ENCODE measurements at regions of chr1 and their contacts with region 1.

Region 1: GRCh38 chr1:6822530-6823359 is 37.5 kb downstream of the CAMTA1 start:
- DNase-seq: no peak
- ATAC-seq: peak; percentile 51; the same call in 1 of the 2 replicates
- H3K4me3 ChIP-seq: no peak overlapping the region
- H3K27ac ChIP-seq: no peak overlapping the region
- H3K4me1 ChIP-seq: peaks cover 11% of the 10 kb centered on the region; the same call in 1 of the 2 replicates
- H3K27me3 ChIP-seq: no peaks in the 10 kb centered on the region
- CTCF ChIP-seq: no peak
- POLR2A ChIP-seq: no peak
- RAD21 ChIP-seq: no peak

Region 2: DNA sequence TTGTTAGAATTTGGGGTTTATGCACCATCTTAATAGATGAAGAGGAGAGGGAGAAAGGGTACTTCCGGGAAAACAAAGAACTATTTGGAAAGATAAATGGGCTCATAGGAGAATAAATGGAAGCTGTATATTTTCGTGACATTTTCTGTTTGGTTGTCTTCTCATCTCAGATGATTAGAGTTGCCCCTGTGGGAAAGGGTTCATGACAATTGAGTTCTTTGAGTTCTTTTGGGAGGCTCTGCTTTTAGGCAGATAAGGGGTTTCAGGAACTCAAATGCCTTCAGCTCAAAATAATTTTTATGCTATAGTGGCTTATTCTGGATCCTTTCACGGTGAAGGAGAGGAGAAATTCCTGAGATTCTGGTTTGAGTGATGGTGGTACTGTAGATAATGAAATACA is 26.1 kb after region 1 on chr1:
- CTCF ChIA-PET with region 1: interaction called, 3 read pairs
- POLR2A ChIA-PET with region 1: no interaction called
- dilution Hi-C with region 1: no loop called
- in situ Hi-C with region 1: no loop called
- intact Hi-C with region 1: loop called (anchors 2 kb)
- DNase-seq: no peak
- ATAC-seq: no peak
- H3K4me3 ChIP-seq: no peak overlapping the region
- H3K27ac ChIP-seq: no peak overlapping the region
- H3K4me1 ChIP-seq: 0 out of 2 replicates have a peak, but pooled peaks cover 2% of the 10 kb centered on the region
- H3K27me3 ChIP-seq: no peaks in the 10 kb centered on the region
- CTCF ChIP-seq: no peak
- POLR2A ChIP-seq: no peak
- RAD21 ChIP-seq: no peak

Region 3: DNA sequence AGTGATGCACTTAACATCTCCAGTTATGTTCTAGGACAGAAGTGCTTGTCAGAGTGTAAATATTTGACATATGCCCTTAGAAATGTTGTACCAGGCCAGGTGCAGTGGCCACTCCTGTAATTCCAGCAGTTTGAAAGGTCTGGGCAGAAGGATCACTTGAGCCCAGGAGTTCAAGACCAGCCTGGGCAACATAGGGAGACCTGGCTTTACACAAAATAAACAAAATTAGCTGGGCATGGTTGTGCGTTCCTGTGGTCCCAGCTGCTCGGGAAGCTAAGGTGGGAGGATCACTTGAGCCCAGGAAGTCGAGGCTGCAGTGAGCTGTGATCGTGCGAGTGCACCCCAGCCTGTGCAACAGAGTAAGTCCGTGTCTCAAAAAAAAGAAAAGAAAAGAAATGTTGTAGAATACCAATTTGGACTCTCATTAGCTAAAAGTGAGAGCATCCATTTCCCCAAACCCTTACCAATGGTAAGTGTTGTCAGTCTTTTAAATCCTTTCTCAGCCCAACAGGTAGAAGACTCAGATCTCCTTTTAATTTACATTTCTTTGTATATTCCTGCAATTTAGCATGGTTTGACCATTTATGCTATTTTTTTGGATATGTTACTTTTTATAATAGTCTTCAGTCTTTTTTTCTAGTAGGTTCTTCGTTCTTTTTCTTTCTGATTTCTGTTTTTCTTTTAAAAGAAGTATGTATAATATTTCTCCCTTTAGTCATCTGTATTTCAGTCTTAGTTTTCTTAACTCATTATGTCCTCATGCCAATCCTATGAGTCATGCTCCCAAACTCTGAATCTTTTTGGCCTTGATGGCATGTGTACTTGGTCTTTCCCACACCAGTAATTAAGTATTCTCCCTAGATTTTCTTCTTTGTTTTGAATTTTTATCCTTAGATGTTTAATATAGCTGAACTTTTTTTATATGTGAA is 36.9 kb after region 1 on chr1:
- CTCF ChIA-PET with region 1: no interaction called
- POLR2A ChIA-PET with region 1: no interaction called
- dilution Hi-C with region 1: no loop called
- in situ Hi-C with region 1: no loop called
- intact Hi-C with region 1: loop called (anchors 5 kb)
- DNase-seq: peak; percentile 99
- ATAC-seq: peak; percentile 79
- H3K4me3 ChIP-seq: no peak overlapping the region
- H3K27ac ChIP-seq: peak overlapping the region; percentile 99
- H3K4me1 ChIP-seq: peaks cover 18% of the 10 kb centered on the region
- H3K27me3 ChIP-seq: no peaks in the 10 kb centered on the region
- CTCF ChIP-seq: no peak
- POLR2A ChIP-seq: no peak
- RAD21 ChIP-seq: no peak